GM13977 (cell line): ENCODE measurements at regions of chr10 and their contacts with region 1.

Region 1: GRCh38 chr10:89954787-89955566 is 253.6 kb downstream of the KIF20B start:
- DNase-seq: peak; percentile 34
- CTCF ChIP-seq: peak; percentile 45

Region 2: GRCh38 chr10:89535171-89536012 is 419.6 kb before region 1 on chr10 and contains the start of gene SLC16A12:
- in situ Hi-C with region 1: no loop called
- DNase-seq: peak; percentile 37
- CTCF ChIP-seq: no peak

Region 3: DNA sequence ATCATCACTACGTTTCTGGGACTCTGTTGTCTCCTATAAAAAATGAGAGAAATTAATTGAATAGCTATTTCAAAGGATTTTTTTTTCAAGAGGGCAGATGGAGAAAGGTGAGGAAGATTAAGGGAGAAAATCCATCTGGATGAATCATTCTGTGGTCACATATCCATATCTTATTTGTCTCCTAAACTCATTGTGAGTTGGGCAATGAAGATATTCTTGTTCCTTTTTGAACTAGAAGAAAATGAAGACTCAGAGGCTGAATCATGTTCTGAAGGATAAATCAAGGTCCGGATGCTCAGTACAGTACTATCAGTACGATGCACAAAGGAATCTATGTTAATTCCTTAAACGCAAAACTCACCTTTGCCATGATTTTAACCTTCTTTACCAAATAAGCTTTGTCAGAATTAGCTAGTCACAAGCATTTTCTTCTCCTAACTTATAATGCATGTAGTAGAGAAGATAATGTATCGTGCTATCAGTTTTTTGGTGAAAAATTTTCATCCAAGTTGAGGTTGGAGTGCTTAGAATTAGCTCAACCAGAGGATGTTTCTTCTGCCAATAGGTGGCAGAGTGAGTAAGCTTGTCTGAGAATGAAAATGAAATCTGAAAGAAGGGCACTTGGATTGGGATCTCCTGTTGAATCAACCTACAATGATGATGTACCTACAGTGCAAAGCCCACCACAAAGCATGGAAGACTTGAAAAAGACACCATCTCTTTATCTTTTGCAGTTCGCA is 193.3 kb after region 1 on chr10:
- in situ Hi-C with region 1: loop called (anchors 25 kb)
- DNase-seq: no peak
- CTCF ChIP-seq: peak; percentile 53